Right ventricle myocardium inferior (tissue), 1 donor: ENCODE measurements at regions of chr7 and their contacts with region 1.

Region 1: GRCh38 chr7:94657771-94658693 is 2.1 kb upstream of the SGCE start:
- DNase-seq: peak; percentile 97
- ATAC-seq: peak; percentile 96

Region 2: DNA sequence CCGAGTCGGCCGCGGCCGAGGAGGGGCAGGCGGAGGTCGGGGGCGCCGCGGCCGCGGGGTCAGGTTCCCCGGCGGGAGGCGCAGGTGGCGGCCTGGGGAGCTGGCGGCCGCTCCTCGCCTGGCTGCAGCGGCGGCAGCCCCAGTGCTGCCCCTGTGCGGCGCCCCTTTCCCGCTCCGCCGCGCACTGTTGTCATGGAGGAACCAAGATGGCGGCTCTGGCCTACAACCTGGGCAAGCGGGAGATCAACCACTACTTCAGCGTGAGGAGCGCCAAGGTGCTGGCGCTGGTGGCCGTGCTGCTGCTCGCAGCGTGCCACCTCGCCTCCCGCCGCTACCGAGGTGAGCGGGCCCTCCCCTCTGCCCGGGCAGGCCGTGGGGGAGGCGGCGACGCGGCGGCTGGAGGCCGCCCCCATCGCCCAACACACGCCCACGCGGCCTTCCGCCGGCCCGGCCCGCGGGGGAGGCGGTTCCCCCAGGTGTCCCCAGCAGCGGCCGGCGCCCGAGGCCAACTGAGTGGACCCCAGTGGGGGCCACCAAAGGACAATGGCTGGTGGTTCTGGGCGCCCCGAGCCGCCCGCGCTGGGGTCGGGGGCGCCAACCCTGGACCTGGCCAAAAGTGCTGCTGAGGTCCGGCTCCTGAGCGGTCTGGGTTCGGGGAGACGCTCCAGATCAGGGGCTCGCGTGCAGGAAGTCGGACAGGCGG is 148.0 kb before region 1 on chr7:
- intact Hi-C with region 1: loop called (anchors 5 kb)
- DNase-seq: peak; percentile 86
- ATAC-seq: peak; percentile 87

Region 3: GRCh38 chr7:95772298-95772770 is 1114.3 kb after region 1 on chr7 and contains the start of gene DYNC1I1:
- intact Hi-C with region 1: no loop called
- DNase-seq: peak; percentile 87
- ATAC-seq: peak; percentile 99
- total RNA-seq, gene DYNC1I1: 30.7 TPM